PC-9 (cell line): ENCODE measurements at regions of chr3 and their contacts with region 1.

Region 1: GRCh38 chr3:49723628-49724551 is at the start of gene GMPPB:
- DNase-seq: peak; percentile 93 to 96
- H3K4me3 ChIP-seq: peak within 1 kb of the TSS; percentile 86
- H3K27ac ChIP-seq: peak within 1 kb of the TSS; percentile 78
- H3K4me1 ChIP-seq: peaks cover 13% of the 10 kb centered on the region; the same call in 1 of the 2 replicates
- H3K27me3 ChIP-seq: no peaks in the 10 kb centered on the region
- CTCF ChIP-seq: no peak
- total RNA-seq, gene GMPPB: 20.4 and 24.2 TPM in 2 replicates

Region 2: DNA sequence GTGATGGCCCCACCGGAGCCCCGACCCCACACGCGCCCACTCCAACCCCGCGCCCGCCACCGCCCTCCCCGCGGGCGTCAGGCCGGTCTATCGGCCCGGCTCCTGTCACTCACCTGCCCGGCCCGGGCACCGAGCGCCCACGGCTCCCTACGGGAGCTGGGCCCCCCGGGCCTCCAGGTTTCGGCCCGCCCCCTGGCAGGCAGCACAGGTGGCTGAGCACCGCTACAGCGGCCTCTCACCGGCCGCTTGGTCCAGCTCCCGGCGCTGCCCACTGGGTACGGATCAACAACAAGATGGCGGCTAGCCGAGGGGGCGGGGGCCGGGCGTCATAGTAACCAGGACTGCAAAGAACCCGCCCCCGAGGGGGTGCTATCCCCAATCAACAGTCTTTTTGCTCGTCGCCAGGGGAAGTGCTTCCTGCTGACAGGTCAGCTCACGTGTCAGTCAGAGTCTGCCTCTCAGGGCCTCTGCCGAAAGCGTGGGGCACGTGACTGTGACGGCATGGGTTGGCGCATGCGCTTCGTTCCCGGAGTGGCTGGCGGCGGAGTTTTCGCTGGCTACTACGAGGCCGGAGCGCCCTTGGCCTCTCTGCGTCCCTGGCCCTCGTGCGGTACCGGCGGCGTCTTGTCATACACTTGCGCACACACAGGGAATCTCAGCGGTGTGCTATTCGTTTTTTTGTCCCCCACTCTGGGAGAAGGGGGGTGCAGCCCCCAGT is 62.5 kb after region 1 on chr3 and contains the start of gene IP6K1:
- CTCF ChIA-PET with region 1: no interaction called
- POLR2A ChIA-PET with region 1: interaction called, 5 read pairs
- intact Hi-C with region 1: loop called (anchors 1 kb)
- DNase-seq: peak; percentile 99
- H3K4me3 ChIP-seq: peak within 1 kb of the TSS; percentile 98
- H3K27ac ChIP-seq: peak within 1 kb of the TSS; percentile 63
- H3K4me1 ChIP-seq: peaks cover 13% of the 10 kb centered on the region; the same call in 1 of the 2 replicates
- H3K27me3 ChIP-seq: no peaks in the 10 kb centered on the region
- CTCF ChIP-seq: no peak
- total RNA-seq, gene IP6K1: 32.9 and 37.0 TPM in 2 replicates

Region 3: DNA sequence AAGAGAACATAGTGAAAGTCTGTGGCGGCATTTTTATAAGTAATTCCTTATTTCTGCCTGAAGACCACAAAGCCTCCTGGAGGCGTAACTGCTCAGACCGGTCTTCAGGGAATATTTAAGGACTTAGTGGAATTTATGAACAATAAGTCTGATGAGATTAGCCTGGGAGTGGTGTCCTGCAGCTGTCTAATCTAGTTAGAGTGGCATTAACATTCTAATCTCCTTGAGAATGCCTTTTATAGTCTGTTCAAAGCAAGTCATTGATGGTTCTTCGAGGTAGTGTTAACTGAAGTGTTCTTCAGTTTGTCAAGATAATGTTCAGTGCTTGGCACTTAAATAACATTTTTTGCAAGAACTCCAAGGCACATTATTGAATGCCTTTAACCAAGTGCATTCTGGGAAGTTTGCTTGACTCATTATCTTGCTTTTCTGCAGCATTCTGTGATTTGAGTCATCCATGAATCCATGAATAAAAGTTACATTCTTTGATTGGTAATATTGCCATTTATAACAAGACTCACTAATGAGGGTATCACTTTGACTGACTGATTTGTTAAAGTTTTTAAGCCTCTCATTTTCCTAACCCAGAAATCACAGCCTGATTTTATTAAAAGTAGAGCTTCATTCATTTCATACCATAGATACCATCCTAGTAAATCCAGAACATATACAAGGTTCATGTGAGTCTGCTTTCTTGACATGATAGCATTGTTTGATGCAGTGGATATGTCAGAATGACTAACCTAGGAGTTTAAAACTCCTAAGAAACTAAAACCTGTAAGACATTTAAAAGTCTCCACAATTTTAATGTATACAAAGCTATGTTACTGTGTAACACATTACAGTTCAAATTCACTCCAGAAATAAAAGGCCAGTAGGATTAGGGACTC is 377.3 kb after region 1 on chr3:
- CTCF ChIA-PET with region 1: no interaction called
- POLR2A ChIA-PET with region 1: no interaction called
- intact Hi-C with region 1: loop called (anchors 10 kb)
- DNase-seq: no peak
- H3K4me3 ChIP-seq: no peak overlapping the region
- H3K27ac ChIP-seq: no peak overlapping the region
- H3K4me1 ChIP-seq: no peaks in the 10 kb centered on the region
- H3K27me3 ChIP-seq: no peaks in the 10 kb centered on the region
- CTCF ChIP-seq: no peak